Dendritic cell treated with granulocyte-macrophage colony-stimulating factor and Interleukin-4, amounts not matched to agents 40 ng/mL and 50 ng/mL, for 4 days (primary cell): ENCODE measurements at regions of chr19 and their contacts with region 1.

Region 1: DNA sequence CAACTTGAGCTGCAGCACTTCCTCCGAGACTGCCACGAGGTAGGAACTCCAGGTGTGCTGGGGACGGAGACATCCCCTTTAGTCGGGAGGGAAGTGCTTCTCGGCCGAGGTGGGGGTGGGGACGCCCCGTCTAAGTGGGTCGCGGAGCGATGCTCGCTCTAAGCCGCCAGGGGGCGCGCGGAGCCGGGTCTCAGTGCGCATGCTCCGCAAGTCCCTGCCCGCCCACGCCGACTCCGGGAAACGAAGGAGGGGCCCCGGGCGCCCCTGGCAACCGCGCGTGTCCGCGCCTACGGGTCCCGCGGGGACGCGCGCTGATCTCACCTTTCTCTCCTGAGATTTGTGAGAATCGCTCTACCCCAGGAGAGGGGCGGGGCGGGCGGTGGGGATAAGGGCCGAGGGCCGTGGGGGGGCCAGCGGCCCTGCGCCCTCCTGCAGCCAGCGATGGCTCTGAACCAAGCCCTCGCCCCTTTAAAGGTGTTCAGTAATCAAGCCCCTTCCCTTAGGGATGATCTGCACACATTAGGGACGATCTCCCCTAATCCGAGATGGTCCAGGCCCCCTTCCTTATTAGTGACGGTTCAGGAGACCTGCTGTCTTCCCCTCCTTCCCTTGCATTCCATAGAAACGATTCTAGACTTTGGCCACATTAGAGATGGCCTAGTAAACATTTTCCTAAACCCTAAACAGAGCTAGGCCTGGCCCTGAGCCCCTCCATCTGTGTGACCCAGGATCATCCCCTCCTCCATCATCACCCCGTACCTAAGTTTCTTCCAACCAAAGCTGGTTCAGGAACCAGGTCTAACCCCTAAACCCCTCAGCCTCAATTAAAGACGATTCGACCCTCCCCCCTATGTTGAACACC is 47.3 kb upstream of the SHKBP1 start:
- H3K4me3 Mint-ChIP-seq: peak overlapping the region; percentile 55
- H3K27ac Mint-ChIP-seq: no peak overlapping the region
- H3K4me1 Mint-ChIP-seq: peaks cover 15% of the 10 kb centered on the region
- H3K27me3 Mint-ChIP-seq: peaks cover 72% of the 10 kb centered on the region

Region 2: GRCh38 chr19:40570313-40571004 is 41.1 kb after region 1 on chr19:
- intact Hi-C with region 1: loop called (anchors 2 kb)
- H3K4me3 Mint-ChIP-seq: peak overlapping the region; percentile 68
- H3K27ac Mint-ChIP-seq: peak overlapping the region; percentile 47
- H3K4me1 Mint-ChIP-seq: peaks cover 35% of the 10 kb centered on the region
- H3K27me3 Mint-ChIP-seq: peaks cover 42% of the 10 kb centered on the region

Region 3: DNA sequence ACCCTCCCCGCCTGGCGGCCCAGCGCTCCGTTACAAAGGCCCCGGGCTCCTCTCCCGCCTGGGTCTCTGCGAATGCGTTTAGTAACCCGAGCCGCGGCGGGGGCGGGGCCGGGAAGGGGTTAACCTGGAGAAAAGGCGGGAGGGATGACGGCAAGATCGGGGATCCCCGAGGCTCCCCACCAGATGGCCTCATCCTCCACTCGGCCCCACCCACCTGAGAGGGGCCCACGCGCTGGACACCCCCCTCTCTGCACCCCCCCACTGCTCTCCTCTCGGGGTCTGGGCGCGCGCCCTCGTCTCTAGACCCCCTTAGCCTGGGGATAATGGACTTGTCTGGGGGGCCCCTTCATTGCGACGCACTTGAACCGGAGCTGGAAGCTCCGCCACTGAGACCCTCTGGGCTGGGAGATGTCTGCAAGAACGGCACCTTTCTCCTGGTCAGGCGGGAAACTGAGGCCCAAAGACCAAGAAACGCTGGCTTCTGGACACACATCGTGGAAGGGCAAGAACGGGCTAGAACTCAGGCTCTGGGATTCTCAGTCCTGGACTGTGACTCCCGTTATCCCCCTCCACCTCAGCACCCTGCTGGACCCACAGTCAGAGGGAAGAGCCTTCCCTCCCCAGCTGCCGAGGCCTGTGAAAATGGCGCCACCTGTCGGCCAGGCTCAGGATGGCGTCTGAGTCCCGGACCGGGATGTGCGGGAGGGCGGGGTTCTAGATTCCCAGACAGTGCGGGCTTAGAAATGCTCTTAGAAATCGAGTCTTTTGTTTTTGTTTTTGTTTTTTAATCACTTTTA is 69.0 kb after region 1 on chr19:
- intact Hi-C with region 1: loop called (anchors 5 kb)
- H3K4me3 Mint-ChIP-seq: no peak overlapping the region
- H3K27ac Mint-ChIP-seq: no peak overlapping the region
- H3K4me1 Mint-ChIP-seq: peaks cover 57% of the 10 kb centered on the region
- H3K27me3 Mint-ChIP-seq: peaks cover 85% of the 10 kb centered on the region